Panc1 (cell line): ENCODE measurements at regions of chr19 and their contacts with region 1.

Region 1: DNA sequence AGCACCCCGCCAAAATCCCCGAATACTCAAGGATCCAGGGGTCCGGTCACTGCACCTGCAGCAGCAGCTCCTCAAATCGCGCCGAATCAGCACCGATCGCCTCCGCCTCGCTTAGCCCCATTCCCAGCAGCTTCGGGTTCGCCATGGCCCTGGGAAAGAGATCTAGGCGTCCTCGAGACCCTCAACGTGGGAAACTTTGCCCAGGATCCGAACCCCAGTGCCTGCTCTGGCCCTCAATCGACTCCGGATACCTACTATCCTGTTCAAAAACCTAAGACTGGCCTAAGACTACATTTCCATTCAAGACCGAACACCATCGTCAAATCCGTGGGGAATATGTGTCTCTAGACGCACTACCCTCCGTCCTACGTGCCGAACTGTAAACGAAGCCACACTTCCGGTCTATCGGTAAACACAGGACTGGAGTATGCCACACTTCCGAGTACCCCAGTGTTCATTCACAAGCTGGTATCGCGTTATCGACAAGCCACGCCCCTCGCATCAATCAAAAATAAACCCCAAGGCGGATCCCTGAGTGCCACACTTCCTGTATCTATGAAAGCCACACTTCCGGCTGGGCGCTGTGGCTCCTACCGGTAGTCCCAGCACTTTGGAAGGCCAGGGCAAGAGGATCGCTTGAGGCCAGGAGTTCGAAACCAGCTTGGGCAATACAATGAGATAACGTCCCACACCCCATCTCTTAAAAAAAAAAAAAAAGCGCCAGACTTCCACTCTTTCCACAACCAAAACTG is at the start of gene PIH1D1:
- DNase-seq: peak; percentile 95
- ATAC-seq: peak; percentile 82
- H3K4me3 ChIP-seq: peak within 1 kb of the TSS; percentile 77 to 96
- H3K27ac ChIP-seq: peak within 1 kb of the TSS; percentile 99
- H3K4me1 ChIP-seq: no peaks in the 10 kb centered on the region; the same call in 1 of the 2 replicates
- H3K27me3 ChIP-seq: no peaks in the 10 kb centered on the region
- CTCF ChIP-seq: no peak
- total RNA-seq, gene PIH1D1: 78.5 TPM

Region 2: GRCh38 chr19:48618916-48619691 is 832.5 kb before region 1 on chr19 and contains the starts of genes RPL18 and SPHK2:
- CTCF ChIA-PET with region 1: no interaction called
- POLR2A ChIA-PET with region 1: no interaction called
- in situ Hi-C with region 1: no loop called
- intact Hi-C with region 1: no loop called
- DNase-seq: peak; percentile 88
- ATAC-seq: peak; percentile 91
- H3K4me3 ChIP-seq: peak within 1 kb of the TSS; percentile 96 to 99
- H3K27ac ChIP-seq: peak within 1 kb of the TSS; percentile 98
- H3K4me1 ChIP-seq: peaks cover 42% of the 10 kb centered on the region
- H3K27me3 ChIP-seq: no peaks in the 10 kb centered on the region
- CTCF ChIP-seq: no peak
- total RNA-seq, gene RPL18: 670 TPM
- total RNA-seq, gene SPHK2: 19.5 TPM

Region 3: DNA sequence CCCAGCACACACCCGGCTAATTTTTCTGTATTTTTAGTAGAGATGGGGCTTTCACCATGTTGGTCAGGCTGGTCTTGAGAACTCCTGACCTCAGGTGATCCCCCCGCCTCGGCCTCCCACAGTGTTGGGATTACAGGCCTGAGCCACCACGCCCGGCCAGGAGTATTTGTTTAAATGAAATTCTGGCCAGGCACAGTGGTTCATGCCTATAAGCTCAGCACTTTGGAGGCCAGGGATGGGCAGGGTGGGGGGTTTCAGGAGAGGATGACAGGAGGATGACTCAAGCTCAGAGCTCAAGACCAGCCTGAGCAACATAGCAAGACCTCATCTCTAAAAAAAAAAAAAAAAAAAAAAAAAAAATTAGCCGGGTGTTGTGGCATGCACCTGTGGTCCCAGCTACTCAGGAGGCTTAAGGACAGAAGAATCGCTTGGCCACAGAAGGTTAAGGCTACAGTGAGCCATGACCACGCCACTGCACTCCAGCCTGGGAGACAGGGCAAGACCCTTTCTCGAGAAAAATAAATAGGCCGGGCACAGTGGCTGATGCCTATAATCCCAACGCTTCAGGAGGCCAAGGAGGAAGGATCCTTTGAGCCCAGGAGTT is 526.3 kb before region 1 on chr19:
- CTCF ChIA-PET with region 1: no interaction called
- POLR2A ChIA-PET with region 1: interaction called, 16 read pairs
- in situ Hi-C with region 1: no loop called
- intact Hi-C with region 1: no loop called
- DNase-seq: peak; percentile 63
- ATAC-seq: peak; percentile 56; the same call in 1 of the 2 replicates
- H3K4me3 ChIP-seq: no peak overlapping the region
- H3K27ac ChIP-seq: no peak overlapping the region
- H3K4me1 ChIP-seq: 0 out of 2 replicates have a peak, but pooled peaks cover 3% of the 10 kb centered on the region
- H3K27me3 ChIP-seq: no peaks in the 10 kb centered on the region
- CTCF ChIP-seq: no peak

Region 4: GRCh38 chr19:49309087-49309486 is 142.5 kb before region 1 on chr19:
- CTCF ChIA-PET with region 1: no interaction called
- POLR2A ChIA-PET with region 1: interaction called, 10 read pairs
- in situ Hi-C with region 1: no loop called
- intact Hi-C with region 1: no loop called
- DNase-seq: no peak
- ATAC-seq: no peak
- H3K4me3 ChIP-seq: no peak overlapping the region
- H3K27ac ChIP-seq: no peak overlapping the region
- H3K4me1 ChIP-seq: no peaks in the 10 kb centered on the region
- H3K27me3 ChIP-seq: no peaks in the 10 kb centered on the region
- CTCF ChIP-seq: no peak

Region 5: DNA sequence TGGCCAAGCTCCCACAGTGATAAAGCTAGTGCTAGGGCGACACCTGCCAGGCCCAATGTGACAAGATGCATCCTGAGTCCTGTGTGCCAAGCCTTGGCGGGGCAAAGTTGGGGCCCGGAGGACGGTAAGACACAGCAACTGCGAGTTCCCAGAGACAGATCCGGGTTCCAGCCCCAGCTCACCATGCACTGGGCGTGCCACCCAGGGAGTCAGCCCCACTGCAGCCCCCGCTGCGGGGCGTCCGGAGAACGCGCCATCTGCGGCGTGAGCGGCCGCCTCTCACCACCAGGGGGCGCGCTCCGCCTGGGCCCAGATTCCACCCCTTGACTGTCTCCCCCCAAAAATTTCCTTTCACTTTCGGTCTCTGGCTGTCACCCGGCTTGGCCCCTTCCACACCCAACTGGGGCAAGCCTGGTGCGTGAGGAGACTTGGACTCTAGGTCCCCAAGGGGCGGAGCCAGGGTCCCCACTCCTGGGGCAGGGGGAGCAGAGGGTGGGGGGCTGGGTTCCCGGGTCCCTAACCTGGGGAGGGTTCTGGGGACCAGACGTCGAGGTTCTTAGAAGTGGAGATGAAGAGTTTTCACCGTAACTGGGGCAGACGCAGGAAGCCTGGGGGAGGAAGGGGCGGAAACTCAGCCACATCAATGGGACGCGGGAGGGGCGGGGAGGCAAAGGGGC is 22.4 kb after region 1 on chr19 and contains the start of gene FLT3LG:
- CTCF ChIA-PET with region 1: no interaction called
- POLR2A ChIA-PET with region 1: no interaction called
- in situ Hi-C with region 1: no loop called
- intact Hi-C with region 1: no loop called
- DNase-seq: no peak
- ATAC-seq: peak; percentile 72
- H3K4me3 ChIP-seq: peak within 1 kb of the TSS; percentile 42 to 59
- H3K27ac ChIP-seq: peak within 1 kb of the TSS; percentile 48; the same call in 1 of the 2 replicates
- H3K4me1 ChIP-seq: no peaks in the 10 kb centered on the region
- H3K27me3 ChIP-seq: no peaks in the 10 kb centered on the region
- CTCF ChIP-seq: peak; percentile 97
- total RNA-seq, gene FLT3LG: 1.5 TPM

Region 6: DNA sequence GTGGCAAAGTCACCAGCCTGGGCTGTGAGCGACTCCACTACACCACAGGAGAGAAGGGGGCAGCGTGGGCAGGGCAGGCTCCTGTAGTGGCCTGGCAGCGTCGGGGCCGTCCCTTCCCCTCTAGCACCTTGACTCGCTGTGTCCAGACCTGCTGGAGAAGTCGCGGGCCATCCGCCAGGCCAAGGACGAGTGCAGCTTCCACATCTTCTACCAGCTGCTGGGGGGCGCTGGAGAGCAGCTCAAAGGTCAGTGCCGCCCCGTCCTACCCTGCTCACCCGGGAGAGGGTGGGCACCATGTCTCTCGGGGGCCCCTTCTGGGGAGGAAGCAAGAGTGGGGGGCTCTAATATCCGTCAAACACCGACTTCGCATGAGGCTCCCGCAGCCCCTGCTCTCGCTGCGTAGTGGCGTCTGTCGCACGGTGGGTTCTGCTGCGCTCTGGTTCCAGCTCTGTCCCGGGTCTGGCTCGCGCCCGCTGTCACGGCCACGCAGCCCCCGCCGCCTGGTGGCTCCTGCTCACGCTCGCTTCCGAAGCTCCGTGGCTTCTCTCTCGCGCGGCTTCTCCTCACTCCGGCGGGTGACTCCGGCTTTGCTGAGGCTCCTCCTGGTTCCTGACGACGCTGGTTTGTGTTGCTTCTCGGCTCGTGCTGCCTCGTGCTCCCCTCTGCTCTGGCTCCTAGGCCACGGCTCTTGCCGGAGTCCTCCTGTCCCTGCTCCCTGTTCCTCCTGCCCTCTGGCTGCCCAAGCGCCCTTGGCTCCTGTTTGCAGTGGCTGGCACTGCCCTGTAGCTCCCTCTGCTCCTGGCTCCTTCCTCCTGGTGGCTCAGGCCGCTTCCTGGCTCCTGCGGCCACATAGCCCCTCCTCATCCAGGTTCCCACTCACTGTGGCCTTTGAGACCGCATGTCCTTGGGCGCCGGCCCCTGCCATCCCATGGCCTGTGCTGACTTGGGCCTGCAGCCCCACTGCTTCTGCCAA is 779.1 kb after region 1 on chr19:
- CTCF ChIA-PET with region 1: no interaction called
- POLR2A ChIA-PET with region 1: no interaction called
- in situ Hi-C with region 1: no loop called
- intact Hi-C with region 1: no loop called
- DNase-seq: no peak
- ATAC-seq: peak; percentile 37; the same call in 1 of the 2 replicates
- H3K4me3 ChIP-seq: no peak overlapping the region
- H3K27ac ChIP-seq: no peak overlapping the region
- H3K4me1 ChIP-seq: no peaks in the 10 kb centered on the region
- H3K27me3 ChIP-seq: no peaks in the 10 kb centered on the region
- CTCF ChIP-seq: no peak; the same call in 1 of the 2 replicates

Region 7: GRCh38 chr19:50607874-50608785 is 1156.5 kb after region 1 on chr19:
- CTCF ChIA-PET with region 1: no interaction called
- POLR2A ChIA-PET with region 1: no interaction called
- in situ Hi-C with region 1: no loop called
- intact Hi-C with region 1: no loop called
- DNase-seq: no peak
- ATAC-seq: peak; percentile 72
- H3K4me3 ChIP-seq: no peak overlapping the region
- H3K27ac ChIP-seq: no peak overlapping the region
- H3K4me1 ChIP-seq: no peaks in the 10 kb centered on the region
- H3K27me3 ChIP-seq: no peaks in the 10 kb centered on the region
- CTCF ChIP-seq: peak; percentile 61